CD4-positive, alpha-beta memory T cell (primary cell): ENCODE measurements at regions of chr11 and their contacts with region 1.

Region 1: GRCh38 chr11:1852877-1853276 is at the start of gene LSP1:
- DNase-seq: peak; percentile 88 to 92 (median 88)
- H3K4me3 ChIP-seq: peak within 1 kb of the TSS; percentile 39 to 95
- H3K4me3 Mint-ChIP-seq: peak within 1 kb of the TSS; percentile 95 to 99 (median 98)
- H3K27ac ChIP-seq: peak within 1 kb of the TSS; percentile 77
- H3K27ac Mint-ChIP-seq: peak within 1 kb of the TSS; percentile 96 to 99 (median 98)
- H3K4me1 ChIP-seq: peaks cover 82% of the 10 kb centered on the region
- H3K4me1 Mint-ChIP-seq: peaks cover 25 to 77% (median 50%) of the 10 kb centered on the region in 4 donors
- H3K27me3 ChIP-seq: no peaks in the 10 kb centered on the region
- H3K27me3 Mint-ChIP-seq: no peaks in the 10 kb centered on the region
- total RNA-seq, gene LSP1: 324 to 327 TPM

Region 2: DNA sequence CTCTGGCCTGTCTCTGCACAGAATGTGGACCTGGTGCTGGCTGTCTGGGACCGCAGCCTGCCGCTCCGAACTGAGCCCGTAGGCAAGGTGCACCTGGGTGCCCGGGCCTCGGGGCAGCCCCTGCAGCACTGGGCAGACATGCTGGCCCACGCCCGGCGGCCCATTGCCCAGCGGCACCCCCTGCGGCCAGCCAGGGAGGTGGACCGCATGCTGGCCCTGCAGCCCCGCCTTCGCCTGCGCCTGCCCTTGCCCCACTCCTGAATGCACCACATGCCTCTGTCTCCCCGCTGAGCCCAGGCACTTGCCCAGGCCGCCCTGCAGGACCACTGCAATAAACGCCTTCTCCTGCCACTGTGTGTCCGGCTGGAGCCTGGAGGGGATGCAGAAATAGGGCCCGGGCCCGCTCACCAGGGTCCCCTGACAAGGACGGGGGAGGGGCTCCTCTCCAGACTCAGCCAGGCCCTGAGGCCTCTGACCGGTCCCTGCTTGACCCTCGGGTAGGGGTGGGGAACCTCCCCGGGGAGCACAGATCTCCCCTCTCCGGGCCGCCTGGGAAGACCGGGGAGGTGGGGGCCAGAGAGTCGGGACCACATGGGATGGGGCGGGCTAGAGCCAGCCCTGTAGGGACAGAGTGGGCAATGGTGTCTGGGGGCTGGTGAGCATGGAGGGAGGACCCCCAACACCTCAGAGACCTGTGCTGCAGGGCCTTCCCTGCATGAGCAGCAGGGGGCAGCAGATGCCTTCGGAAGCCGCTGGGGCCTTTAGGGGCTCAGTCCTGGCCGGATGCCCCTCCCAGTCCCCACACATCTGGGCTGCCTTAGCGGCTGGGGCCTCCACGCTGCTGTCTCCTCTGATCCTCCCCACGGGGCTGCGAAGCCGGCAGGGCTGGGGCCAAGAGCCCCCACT is 15.5 kb before region 1 on chr11:
- CTCF ChIA-PET with region 1: interaction called, 10 read pairs
- POLR2A ChIA-PET with region 1: interaction called, 27 read pairs
- intact Hi-C with region 1: loop called (anchors 1 kb)
- DNase-seq: peak; percentile 63 to 79 (median 75)
- H3K4me3 ChIP-seq: no peak overlapping the region
- H3K4me3 Mint-ChIP-seq: no peak overlapping the region
- H3K27ac ChIP-seq: no peak overlapping the region
- H3K27ac Mint-ChIP-seq: peak overlapping the region in 1 of 7 donors; percentile 30
- H3K4me1 ChIP-seq: peaks cover 20% of the 10 kb centered on the region
- H3K4me1 Mint-ChIP-seq: peaks cover 5 to 10% (median 6%) of the 10 kb centered on the region in 4 donors
- H3K27me3 ChIP-seq: no peaks in the 10 kb centered on the region
- H3K27me3 Mint-ChIP-seq: no peaks in the 10 kb centered on the region

Region 3: GRCh38 chr11:1870721-1871466 is 18.0 kb after region 1 on chr11:
- CTCF ChIA-PET with region 1: interaction called, 7 read pairs
- POLR2A ChIA-PET with region 1: interaction called, 189 read pairs
- intact Hi-C with region 1: loop called (anchors 1 kb)
- DNase-seq: peak; percentile 55 to 75 (median 65)
- H3K4me3 ChIP-seq: no peak overlapping the region
- H3K4me3 Mint-ChIP-seq: peak overlapping the region; percentile 72 to 91 (median 82)
- H3K27ac ChIP-seq: peak overlapping the region; percentile 28
- H3K27ac Mint-ChIP-seq: peak overlapping the region; percentile 84 to 97 (median 91)
- H3K4me1 ChIP-seq: peaks cover 65% of the 10 kb centered on the region
- H3K4me1 Mint-ChIP-seq: peaks cover 30 to 74% (median 54%) of the 10 kb centered on the region in 4 donors
- H3K27me3 ChIP-seq: no peaks in the 10 kb centered on the region
- H3K27me3 Mint-ChIP-seq: no peaks in the 10 kb centered on the region

Region 4: GRCh38 chr11:1889224-1890120 is 36.6 kb after region 1 on chr11:
- CTCF ChIA-PET with region 1: interaction called, 3 read pairs
- POLR2A ChIA-PET with region 1: interaction called, 189 read pairs
- intact Hi-C with region 1: loop called (anchors 1 kb)
- DNase-seq: peak; percentile 83 to 85 (median 84)
- H3K4me3 ChIP-seq: peak overlapping the region in 1 of 2 donors; percentile 39
- H3K4me3 Mint-ChIP-seq: peak overlapping the region; percentile 14 to 84 (median 70)
- H3K27ac ChIP-seq: peak overlapping the region; percentile 53
- H3K27ac Mint-ChIP-seq: peak overlapping the region; percentile 17 to 94 (median 88)
- H3K4me1 ChIP-seq: peaks cover 47% of the 10 kb centered on the region
- H3K4me1 Mint-ChIP-seq: peaks cover 23 to 44% (median 32%) of the 10 kb centered on the region in 4 donors
- H3K27me3 ChIP-seq: no peaks in the 10 kb centered on the region
- H3K27me3 Mint-ChIP-seq: no peaks in the 10 kb centered on the region

Region 5: GRCh38 chr11:1917671-1918516 is 65.0 kb after region 1 on chr11:
- CTCF ChIA-PET with region 1: interaction called, 3 read pairs
- POLR2A ChIA-PET with region 1: interaction called, 17 read pairs
- intact Hi-C with region 1: loop called (anchors 5 kb)
- DNase-seq: peak in 1 of 5 donors; percentile 11
- H3K4me3 ChIP-seq: no peak overlapping the region
- H3K4me3 Mint-ChIP-seq: no peak overlapping the region
- H3K27ac ChIP-seq: no peak overlapping the region
- H3K27ac Mint-ChIP-seq: peak overlapping the region in 1 of 7 donors; percentile 18
- H3K4me1 ChIP-seq: no peaks in the 10 kb centered on the region
- H3K4me1 Mint-ChIP-seq: peaks cover 6 to 12% (median 9%) of the 10 kb centered on the region in 4 donors
- H3K27me3 ChIP-seq: no peaks in the 10 kb centered on the region
- H3K27me3 Mint-ChIP-seq: peaks cover 7% of the 10 kb centered on the region in 2 donors

Region 6: GRCh38 chr11:1946812-1947484 is 94.1 kb after region 1 on chr11 and contains the start of gene MRPL23:
- CTCF ChIA-PET with region 1: interaction called, 4 read pairs
- POLR2A ChIA-PET with region 1: interaction called, 29 read pairs
- intact Hi-C with region 1: no loop called
- DNase-seq: peak in 4 of 5 donors; percentile 18 to 58 (median 56)
- H3K4me3 ChIP-seq: no peak within 1 kb of the TSS
- H3K4me3 Mint-ChIP-seq: no peak within 1 kb of the TSS
- H3K27ac ChIP-seq: no peak within 1 kb of the TSS
- H3K27ac Mint-ChIP-seq: no peak within 1 kb of the TSS
- H3K4me1 ChIP-seq: no peaks in the 10 kb centered on the region
- H3K4me1 Mint-ChIP-seq: peaks cover 0 to 7% (median 5%) of the 10 kb centered on the region in 4 donors
- H3K27me3 ChIP-seq: no peaks in the 10 kb centered on the region
- H3K27me3 Mint-ChIP-seq: no peaks in the 10 kb centered on the region
- total RNA-seq, gene MRPL23: 43.9 to 51.0 TPM

Region 7: GRCh38 chr11:2002807-2003206 is 149.9 kb after region 1 on chr11:
- CTCF ChIA-PET with region 1: interaction called, 10 read pairs
- POLR2A ChIA-PET with region 1: interaction called, 7 read pairs
- intact Hi-C with region 1: no loop called
- DNase-seq: no peak
- H3K4me3 ChIP-seq: no peak overlapping the region
- H3K4me3 Mint-ChIP-seq: no peak overlapping the region
- H3K27ac ChIP-seq: no peak overlapping the region
- H3K27ac Mint-ChIP-seq: no peak overlapping the region
- H3K4me1 ChIP-seq: no peaks in the 10 kb centered on the region
- H3K4me1 Mint-ChIP-seq: no peaks in the 10 kb centered on the region
- H3K27me3 ChIP-seq: no peaks in the 10 kb centered on the region
- H3K27me3 Mint-ChIP-seq: no peaks in the 10 kb centered on the region